Dorsolateral prefrontal cortex (tissue), 120 donors: ENCODE measurements at regions of chr2 and their contacts with region 1.

Region 1: DNA sequence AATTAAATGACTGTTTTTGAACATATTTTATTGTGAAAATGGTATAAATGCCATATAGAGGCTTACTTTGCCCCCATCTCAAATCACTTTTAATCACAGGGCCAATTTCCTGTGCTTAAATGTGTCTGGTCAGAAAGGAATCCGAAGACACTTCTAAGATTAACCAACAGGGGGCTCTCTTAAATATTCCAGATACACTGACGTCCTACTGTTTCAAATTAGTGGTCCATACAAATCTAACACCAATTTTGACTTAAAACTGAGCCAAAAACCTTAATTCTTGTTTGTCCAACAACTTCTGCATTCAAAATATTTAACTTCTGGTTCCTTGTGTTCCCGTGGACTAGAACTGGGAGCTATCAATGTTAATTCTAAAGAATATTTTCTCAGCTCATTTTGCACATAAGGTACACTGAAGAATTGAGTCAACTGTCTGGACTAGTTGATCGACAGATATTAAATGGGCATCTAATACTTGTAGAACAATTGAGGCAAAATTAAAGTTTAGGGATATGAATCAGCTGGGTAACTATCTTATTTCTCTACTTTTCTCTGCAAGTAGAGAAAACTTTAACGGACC is 557.5 kb downstream of the ARHGAP15 start:
- DNase-seq: no peak
- H3K4me3 ChIP-seq: no peak overlapping the region
- H3K27ac ChIP-seq: no peak overlapping the region
- H3K27me3 ChIP-seq: no peaks in the 10 kb centered on the region
- CTCF ChIP-seq: peak; percentile 47 to 78 (median 64)

Region 2: DNA sequence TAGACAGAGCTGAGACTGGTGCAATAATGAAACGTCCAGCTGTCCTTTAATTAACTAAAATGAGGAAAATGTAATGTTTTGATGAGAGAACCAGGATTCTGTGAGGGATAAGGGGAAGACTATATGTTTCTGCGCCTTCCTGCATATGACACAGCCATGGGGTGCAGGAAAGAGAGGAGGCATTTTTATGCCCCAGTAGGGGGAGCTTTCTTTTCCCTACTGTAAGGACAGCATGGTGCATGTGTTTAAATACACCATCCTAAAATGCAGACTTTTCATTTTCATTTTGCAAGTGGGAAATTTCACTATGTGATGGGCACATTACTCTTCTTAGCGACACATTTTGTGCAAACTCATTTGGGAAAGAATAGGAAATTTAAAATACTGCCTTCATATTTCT is 111.3 kb before region 1 on chr2:
- intact Hi-C with region 1: loop called (anchors 10 kb)
- DNase-seq: no peak
- H3K4me3 ChIP-seq: no peak overlapping the region
- H3K27ac ChIP-seq: no peak overlapping the region
- H3K27me3 ChIP-seq: no peaks in the 10 kb centered on the region
- CTCF ChIP-seq: peak in 49 of 56 donors; percentile 18 to 65 (median 45)

Region 3: DNA sequence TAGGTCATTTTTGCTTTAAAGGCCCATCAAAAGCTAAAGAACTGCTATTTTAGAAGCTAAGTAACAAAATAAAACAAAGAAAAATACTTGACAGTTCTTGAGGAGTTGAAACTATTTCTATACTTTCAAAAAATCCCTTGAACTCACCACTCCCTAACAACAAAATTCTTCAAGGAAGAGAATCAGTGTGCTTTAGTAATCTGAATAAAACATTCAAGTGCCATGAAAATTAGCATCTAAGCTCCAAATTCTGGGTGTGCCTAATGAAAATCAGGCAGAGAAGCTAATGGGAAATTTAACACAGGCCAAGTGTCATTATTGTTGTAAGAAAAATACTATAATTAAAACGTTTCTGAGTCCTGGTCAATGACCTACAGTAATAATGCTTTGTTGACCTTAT is 376.9 kb after region 1 on chr2:
- intact Hi-C with region 1: no loop called
- DNase-seq: no peak
- H3K4me3 ChIP-seq: no peak overlapping the region
- H3K27ac ChIP-seq: no peak overlapping the region
- H3K27me3 ChIP-seq: no peaks in the 10 kb centered on the region
- CTCF ChIP-seq: no peak